Prostate gland (tissue), 2 donors: ENCODE measurements at regions of chr6 and their contacts with region 1.

Region 1: DNA sequence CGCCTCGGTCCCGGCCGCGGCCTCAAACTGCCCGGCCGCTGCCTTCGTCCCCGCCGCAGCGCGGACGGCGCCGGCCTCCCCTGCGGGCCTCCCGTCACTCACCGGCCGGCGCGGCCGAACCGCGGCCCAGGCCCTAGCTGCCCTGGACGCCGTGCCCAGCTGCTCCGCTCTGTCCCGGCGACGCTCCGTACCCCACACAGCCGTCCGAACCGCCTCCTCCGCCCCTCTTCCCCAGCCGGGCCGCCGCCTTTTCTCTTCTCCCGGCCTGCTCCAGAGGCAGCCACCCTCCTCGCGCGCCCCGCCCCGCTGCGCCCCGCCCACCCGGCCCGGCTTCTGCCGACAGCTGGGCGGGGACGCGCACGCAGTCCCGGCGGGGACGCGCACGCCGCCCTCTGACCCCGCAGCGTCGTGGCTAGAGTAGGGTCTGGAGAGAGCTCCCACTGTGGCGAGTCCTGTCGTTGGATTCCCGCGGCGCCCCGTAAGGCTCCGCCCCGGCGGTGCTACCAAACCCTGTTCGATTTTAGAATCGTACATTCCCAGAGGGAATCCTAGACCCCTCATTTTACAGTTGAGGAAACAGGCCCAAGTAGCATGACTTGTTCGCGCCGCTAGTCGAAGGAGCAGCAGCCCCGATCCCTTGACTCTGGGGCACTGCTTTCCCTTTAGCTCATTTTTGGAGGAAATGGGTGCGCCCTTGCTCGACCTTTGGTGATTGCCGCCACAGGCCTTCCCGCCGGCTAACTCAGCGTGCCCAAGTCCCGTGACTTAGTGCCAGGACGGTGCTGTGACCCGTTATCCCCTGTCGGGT is at the start of gene FBXO30:
- DNase-seq: peak; percentile 80
- H3K4me3 ChIP-seq: peak within 1 kb of the TSS; percentile 58 to 67
- H3K27ac ChIP-seq: peak within 1 kb of the TSS; percentile 79 to 87
- H3K4me1 ChIP-seq: no peaks in the 10 kb centered on the region
- H3K27me3 ChIP-seq: no peaks in the 10 kb centered on the region
- CTCF ChIP-seq: peak in 1 of 4 experiments; percentile 22
- POLR2A ChIP-seq: peak; percentile 78
- total RNA-seq, gene FBXO30: 6.5 to 9.6 TPM

Region 2: GRCh38 chr6:145872669-145873068 is 58.0 kb after region 1 on chr6:
- intact Hi-C with region 1: no loop called
- DNase-seq: no peak
- H3K4me3 ChIP-seq: no peak overlapping the region
- H3K27ac ChIP-seq: no peak overlapping the region
- H3K4me1 ChIP-seq: no peaks in the 10 kb centered on the region
- H3K27me3 ChIP-seq: no peaks in the 10 kb centered on the region
- CTCF ChIP-seq: no peak
- POLR2A ChIP-seq: no peak

Region 3: GRCh38 chr6:145887969-145888368 is 73.3 kb after region 1 on chr6:
- intact Hi-C with region 1: loop called (anchors 10 kb)
- DNase-seq: peak; percentile 4
- H3K4me3 ChIP-seq: no peak overlapping the region
- H3K27ac ChIP-seq: no peak overlapping the region
- H3K4me1 ChIP-seq: peaks cover 7% of the 10 kb centered on the region
- H3K27me3 ChIP-seq: no peaks in the 10 kb centered on the region
- CTCF ChIP-seq: peak in 2 of 4 experiments; percentile 27 to 51
- POLR2A ChIP-seq: no peak

Region 4: GRCh38 chr6:145963216-145964068 is 148.7 kb after region 1 on chr6:
- intact Hi-C with region 1: loop called (anchors 5 kb)
- DNase-seq: peak; percentile 21
- H3K4me3 ChIP-seq: peak overlapping the region; percentile 69 to 75
- H3K27ac ChIP-seq: peak overlapping the region; percentile 81
- H3K4me1 ChIP-seq: no peaks in the 10 kb centered on the region
- H3K27me3 ChIP-seq: no peaks in the 10 kb centered on the region
- CTCF ChIP-seq: no peak
- POLR2A ChIP-seq: no peak